ENCODE measurements at regions of chr18 and their contacts with region 1.

Region 1: DNA sequence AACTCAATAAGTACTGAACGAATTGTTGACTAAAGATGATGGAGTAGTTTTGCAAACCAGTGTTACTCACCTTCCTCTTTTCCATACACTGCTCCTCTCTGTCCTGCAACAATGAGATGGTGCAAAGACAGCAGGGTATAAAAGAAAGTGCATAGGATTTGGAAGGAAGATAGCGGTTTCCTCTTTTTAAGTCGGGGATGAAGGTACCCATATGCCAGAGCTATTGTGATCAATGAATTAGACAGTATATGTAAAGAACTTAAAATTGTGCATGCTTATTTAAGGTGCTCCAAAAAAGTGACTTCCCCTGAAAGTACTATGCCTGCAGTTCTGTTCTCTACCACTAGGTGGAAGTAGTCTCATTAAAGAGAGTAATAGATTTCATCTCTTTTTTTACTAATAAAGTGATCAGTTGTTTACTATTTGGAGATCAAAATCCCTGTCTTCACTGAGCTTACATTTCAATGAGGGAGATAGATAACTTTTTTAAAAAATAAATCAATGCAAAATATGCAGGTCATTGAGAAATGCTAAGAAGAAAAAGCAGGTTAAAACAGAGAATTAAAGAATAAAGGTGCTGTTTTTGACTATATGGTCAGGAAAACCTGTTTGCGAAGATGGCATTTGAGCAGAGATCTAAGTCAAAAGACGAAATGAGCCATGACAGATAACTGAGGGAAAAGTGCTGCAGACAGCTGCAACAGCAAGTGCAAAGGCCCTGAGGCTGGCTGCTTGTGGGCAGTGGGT is 339.7 kb upstream of the SLC14A2 start:
- DNase-seq: no peak
- H3K4me3 ChIP-seq: no peak overlapping the region
- H3K27ac ChIP-seq: no peak overlapping the region
- H3K4me1 ChIP-seq: no peaks in the 10 kb centered on the region
- H3K27me3 ChIP-seq: no peaks in the 10 kb centered on the region
- CTCF ChIP-seq: peak; percentile 35 to 87 (median 68)
- POLR2A ChIP-seq: no peak

Region 2: GRCh38 chr18:45149712-45150111 is 125.8 kb before region 1 on chr18:
- intact Hi-C with region 1: no loop called
- DNase-seq: no peak
- H3K4me3 ChIP-seq: no peak overlapping the region
- H3K27ac ChIP-seq: no peak overlapping the region
- H3K4me1 ChIP-seq: no peaks in the 10 kb centered on the region
- H3K27me3 ChIP-seq: no peaks in the 10 kb centered on the region
- CTCF ChIP-seq: no peak
- POLR2A ChIP-seq: no peak

Region 3: DNA sequence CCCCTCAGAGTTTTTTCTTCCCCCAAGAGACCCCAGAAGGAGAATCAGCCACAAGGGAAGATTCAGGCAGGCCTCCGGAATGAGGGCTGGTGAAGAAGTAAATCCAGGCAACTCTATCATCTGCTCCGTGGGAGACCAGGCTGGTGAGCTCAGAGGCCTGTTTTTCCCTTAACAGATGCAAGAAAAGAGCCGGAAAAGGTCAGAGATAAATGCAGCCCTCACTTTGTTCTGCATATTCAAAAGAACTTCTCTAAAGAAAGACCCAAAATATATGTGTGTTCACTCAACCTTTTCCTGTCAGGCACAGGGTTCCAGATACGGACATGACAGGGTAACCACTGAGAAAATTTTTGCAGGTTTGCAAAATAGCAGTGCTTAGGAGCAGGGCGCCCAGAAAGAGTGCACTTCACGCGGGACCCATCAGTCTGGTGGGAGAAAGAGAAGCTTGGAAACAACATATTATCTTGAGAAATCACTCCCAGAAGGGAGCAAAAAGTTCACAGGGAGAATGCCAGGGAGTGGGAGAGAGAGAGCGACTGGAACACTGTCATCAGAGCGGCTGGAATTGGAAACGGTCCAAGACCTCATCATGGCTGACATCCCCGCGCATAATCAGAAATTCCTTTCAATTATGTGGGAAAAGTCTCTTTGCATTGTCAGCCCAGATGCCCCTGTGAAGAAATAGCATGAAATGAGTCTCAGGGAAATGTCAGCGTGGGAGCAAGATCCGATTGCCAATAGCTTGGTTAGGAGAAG is 94.9 kb after region 1 on chr18:
- intact Hi-C with region 1: no loop called
- DNase-seq: no peak
- H3K4me3 ChIP-seq: no peak overlapping the region
- H3K27ac ChIP-seq: peak overlapping the region in 2 of 4 donors; percentile 31 to 39
- H3K4me1 ChIP-seq: peaks cover 0 to 13% (median 0%) of the 10 kb centered on the region in 3 donors
- H3K27me3 ChIP-seq: no peaks in the 10 kb centered on the region
- CTCF ChIP-seq: no peak
- POLR2A ChIP-seq: no peak

Region 4: GRCh38 chr18:45384137-45384961 is 108.8 kb after region 1 on chr18:
- intact Hi-C with region 1: loop called (anchors 5 kb)
- DNase-seq: no peak
- H3K4me3 ChIP-seq: no peak overlapping the region
- H3K27ac ChIP-seq: no peak overlapping the region
- H3K4me1 ChIP-seq: peaks cover 0 to 6% (median 0%) of the 10 kb centered on the region in 3 donors
- H3K27me3 ChIP-seq: peaks cover 0 to 3% (median 0%) of the 10 kb centered on the region in 4 donors
- CTCF ChIP-seq: peak; percentile 58 to 77 (median 63)
- POLR2A ChIP-seq: no peak